BJ (cell line): ENCODE measurements at regions of chr12 and their contacts with region 1.

Region 1: DNA sequence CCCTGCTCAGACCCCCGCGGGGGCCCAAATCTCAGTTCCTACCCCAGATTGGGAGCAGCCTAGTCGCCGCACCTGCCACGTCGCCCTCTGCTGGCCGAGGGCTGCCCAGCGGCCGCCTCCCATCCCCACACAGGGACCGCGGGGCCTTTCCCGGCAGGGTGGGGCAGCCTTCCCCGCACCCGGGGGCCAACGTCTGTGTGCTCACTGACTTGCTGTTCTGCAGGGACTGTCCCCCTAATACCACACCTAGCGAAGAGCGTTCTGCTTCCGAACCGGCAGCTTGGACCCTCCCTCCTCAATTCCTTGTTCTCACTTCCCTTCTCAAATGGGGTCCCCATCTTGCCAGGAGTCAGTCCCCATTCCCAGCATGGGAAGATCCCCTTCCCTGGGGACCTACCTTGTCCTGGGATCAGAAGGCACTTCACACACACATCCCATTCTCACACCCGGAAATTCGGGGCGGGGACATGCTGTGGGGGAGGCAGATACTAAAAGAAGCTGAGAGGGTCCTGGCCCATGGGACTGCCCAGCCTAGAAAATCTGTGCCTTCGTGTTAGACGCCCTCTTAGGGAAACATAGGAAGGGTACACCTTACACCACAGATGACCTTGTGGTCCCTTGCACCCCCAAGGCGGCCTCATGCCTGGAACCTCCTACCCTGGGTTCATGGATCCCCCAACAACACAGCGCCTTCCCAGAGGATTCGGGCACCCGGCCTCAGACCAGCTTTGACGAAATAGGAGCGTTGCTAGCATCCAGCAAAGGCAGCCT is 16.4 kb downstream of the ACVRL1 start:
- DNase-seq: no peak
- H3K4me3 ChIP-seq: 0 out of 2 replicates have a peak overlapping the region, but pooled peaks have one; percentile 6
- H3K27me3 ChIP-seq: no peaks in the 10 kb centered on the region
- CTCF ChIP-seq: peak; percentile 94

Region 2: DNA sequence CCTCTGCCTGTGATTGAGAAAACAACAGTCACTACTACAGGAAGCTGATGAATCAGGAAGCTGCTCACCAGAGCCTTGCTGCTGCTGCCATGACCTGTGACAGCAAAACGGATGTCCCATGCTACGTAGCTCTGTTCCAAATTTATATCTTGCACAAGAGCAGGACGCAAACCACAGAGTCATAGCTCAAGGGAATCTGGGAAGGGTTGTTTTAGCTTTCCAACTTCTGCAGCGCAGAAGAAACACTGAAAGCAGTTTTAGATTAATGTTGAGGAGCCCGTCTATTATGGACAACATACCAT is 37.7 kb before region 1 on chr12:
- CTCF ChIA-PET with region 1: interaction called, 28 read pairs
- POLR2A ChIA-PET with region 1: no interaction called
- DNase-seq: peak; percentile 88
- H3K4me3 ChIP-seq: no peak overlapping the region
- H3K27me3 ChIP-seq: no peaks in the 10 kb centered on the region
- CTCF ChIP-seq: no peak

Region 3: DNA sequence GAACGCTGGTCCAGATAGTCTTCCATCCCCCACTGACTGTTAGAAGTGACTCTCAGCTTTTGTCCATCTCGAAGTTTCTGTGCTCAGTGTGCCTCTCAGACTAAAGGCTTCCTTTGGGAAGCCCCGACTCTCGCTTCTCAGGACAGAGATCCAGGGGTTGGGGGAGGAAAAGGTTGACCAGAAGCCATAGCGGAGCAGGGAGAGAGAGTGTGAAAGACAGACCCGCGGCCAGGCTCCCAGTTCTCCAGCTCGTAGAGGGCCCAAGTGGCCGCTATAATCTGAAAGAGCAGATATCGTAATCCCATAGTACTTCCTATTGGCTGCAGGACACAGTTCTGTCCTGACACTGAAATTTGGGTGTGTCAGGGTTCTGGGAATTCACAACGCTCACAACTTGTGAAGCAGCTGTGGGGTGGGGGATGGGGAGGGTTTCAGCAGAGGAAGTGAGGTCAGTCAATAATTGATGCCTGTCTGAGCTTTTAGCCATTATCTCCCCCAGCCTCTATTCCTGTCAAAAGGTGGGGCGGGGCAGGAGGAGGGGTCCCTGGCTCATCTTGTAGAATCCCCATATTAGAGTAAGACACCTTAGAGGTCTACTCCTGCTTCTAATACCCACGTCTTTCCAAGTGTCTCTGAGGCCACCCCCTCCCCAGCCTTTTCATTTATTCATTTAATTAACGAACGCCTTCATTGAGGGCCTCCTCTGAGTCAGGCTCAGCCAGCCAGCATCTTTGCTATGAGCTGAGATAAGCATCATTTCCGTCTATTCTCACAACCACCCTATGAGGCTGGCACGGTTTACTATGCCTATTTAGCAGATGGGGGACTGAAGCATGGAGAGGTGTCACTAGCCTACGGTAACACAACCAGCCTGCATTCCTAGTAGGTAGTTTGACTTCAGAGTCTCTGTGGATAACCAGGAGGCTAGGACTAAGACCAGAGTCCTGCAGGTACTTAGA is 17.9 kb before region 1 on chr12:
- CTCF ChIA-PET with region 1: interaction called, 165 read pairs
- POLR2A ChIA-PET with region 1: no interaction called
- DNase-seq: no peak
- H3K4me3 ChIP-seq: no peak overlapping the region
- H3K27me3 ChIP-seq: no peaks in the 10 kb centered on the region
- CTCF ChIP-seq: no peak

Region 4: GRCh38 chr12:51941011-51941581 is 17.4 kb after region 1 on chr12:
- CTCF ChIA-PET with region 1: interaction called, 42 read pairs
- POLR2A ChIA-PET with region 1: no interaction called
- DNase-seq: no peak
- H3K4me3 ChIP-seq: no peak overlapping the region
- H3K27me3 ChIP-seq: peaks cover 5% of the 10 kb centered on the region
- CTCF ChIP-seq: no peak

Region 5: GRCh38 chr12:51980051-51980808 is 56.5 kb after region 1 on chr12:
- CTCF ChIA-PET with region 1: interaction called, 13 read pairs
- POLR2A ChIA-PET with region 1: no interaction called
- DNase-seq: no peak
- H3K4me3 ChIP-seq: no peak overlapping the region
- H3K27me3 ChIP-seq: no peaks in the 10 kb centered on the region
- CTCF ChIP-seq: peak; percentile 96

Region 6: DNA sequence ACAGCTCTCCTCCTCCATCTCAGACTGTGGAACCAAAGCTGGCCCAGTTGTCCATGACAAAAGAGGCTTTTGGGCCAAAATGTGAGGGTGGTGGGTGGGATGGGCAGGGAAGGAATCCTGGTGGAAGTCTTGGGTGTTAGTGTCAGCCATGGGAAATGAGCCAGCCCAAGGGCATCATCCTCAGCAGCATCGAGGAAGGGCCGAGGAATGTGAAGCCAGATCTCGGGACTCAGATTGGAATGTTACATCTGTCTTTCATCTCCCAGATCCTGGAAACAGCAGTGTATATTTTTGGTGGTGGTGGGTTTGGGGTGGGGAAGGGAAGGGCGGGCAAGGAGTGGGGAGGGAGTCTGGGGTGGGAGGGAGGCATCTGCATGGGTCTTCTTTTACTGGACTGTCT is 71.3 kb after region 1 on chr12:
- CTCF ChIA-PET with region 1: no interaction called
- POLR2A ChIA-PET with region 1: no interaction called
- DNase-seq: no peak
- H3K4me3 ChIP-seq: no peak overlapping the region
- H3K27me3 ChIP-seq: no peaks in the 10 kb centered on the region
- CTCF ChIP-seq: no peak